ENCODE measurements at regions of chr10 and their contacts with region 1.

Region 1: DNA sequence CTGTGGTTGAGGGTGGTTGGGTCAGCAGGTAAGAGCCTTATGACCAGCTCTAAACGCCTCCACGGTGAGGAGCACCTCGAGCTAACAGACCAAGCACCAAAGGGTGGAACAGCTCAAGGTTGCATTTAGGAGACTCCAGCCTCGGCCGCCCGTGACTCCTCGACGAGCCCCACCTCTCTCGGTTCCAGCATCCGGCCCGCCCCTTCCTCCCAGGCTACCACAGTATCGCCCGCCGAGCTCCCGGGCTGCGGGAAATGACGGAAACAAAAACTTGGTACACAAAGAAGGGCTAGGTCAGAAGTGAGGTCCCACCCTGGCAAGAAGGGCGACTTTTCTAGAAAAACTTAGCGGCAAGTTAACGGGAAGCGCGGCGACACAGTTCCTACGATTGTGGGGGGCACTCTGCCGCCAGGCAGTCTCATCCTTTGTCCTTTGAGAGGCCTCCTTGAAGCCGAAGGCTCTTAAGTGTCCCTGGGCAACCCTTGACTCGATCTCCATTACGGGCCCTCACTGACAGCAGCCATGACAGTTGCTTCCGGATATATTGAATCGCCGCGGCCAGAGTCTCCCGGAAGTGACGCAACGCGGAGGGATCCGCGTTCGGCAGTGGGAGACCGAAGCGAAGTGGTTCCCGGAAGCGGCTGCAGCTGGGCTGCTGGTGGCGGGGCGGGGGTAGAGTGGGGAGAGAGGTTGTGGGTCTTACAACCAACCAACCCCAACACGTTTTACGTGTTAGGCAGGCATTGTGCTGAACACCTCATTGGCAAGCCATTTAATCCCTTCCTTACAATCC is 40.2 kb upstream of the ZNF518A start:
- DNase-seq: peak; percentile 89 to 94 (median 91)
- H3K4me3 ChIP-seq: peak overlapping the region; percentile 71 to 88
- H3K4me3 Mint-ChIP-seq: peak overlapping the region; percentile 91 to 97 (median 96)
- H3K27ac ChIP-seq: peak overlapping the region; percentile 91
- H3K27ac Mint-ChIP-seq: peak overlapping the region; percentile 98 to 100 (median 99)
- H3K4me1 ChIP-seq: peaks cover 12% of the 10 kb centered on the region
- H3K4me1 Mint-ChIP-seq: peaks cover 5 to 11% (median 7%) of the 10 kb centered on the region in 4 donors
- H3K27me3 ChIP-seq: peaks cover 9% of the 10 kb centered on the region
- H3K27me3 Mint-ChIP-seq: peaks cover 23 to 26% of the 10 kb centered on the region in 2 donors

Region 2: GRCh38 chr10:95675403-95676112 is 414.3 kb before region 1 on chr10:
- CTCF ChIA-PET with region 1: no interaction called
- POLR2A ChIA-PET with region 1: no interaction called
- intact Hi-C with region 1: no loop called
- DNase-seq: no peak
- H3K4me3 ChIP-seq: no peak overlapping the region
- H3K4me3 Mint-ChIP-seq: no peak overlapping the region
- H3K27ac ChIP-seq: no peak overlapping the region
- H3K27ac Mint-ChIP-seq: no peak overlapping the region
- H3K4me1 ChIP-seq: no peaks in the 10 kb centered on the region
- H3K4me1 Mint-ChIP-seq: no peaks in the 10 kb centered on the region
- H3K27me3 ChIP-seq: no peaks in the 10 kb centered on the region
- H3K27me3 Mint-ChIP-seq: no peaks in the 10 kb centered on the region

Region 3: DNA sequence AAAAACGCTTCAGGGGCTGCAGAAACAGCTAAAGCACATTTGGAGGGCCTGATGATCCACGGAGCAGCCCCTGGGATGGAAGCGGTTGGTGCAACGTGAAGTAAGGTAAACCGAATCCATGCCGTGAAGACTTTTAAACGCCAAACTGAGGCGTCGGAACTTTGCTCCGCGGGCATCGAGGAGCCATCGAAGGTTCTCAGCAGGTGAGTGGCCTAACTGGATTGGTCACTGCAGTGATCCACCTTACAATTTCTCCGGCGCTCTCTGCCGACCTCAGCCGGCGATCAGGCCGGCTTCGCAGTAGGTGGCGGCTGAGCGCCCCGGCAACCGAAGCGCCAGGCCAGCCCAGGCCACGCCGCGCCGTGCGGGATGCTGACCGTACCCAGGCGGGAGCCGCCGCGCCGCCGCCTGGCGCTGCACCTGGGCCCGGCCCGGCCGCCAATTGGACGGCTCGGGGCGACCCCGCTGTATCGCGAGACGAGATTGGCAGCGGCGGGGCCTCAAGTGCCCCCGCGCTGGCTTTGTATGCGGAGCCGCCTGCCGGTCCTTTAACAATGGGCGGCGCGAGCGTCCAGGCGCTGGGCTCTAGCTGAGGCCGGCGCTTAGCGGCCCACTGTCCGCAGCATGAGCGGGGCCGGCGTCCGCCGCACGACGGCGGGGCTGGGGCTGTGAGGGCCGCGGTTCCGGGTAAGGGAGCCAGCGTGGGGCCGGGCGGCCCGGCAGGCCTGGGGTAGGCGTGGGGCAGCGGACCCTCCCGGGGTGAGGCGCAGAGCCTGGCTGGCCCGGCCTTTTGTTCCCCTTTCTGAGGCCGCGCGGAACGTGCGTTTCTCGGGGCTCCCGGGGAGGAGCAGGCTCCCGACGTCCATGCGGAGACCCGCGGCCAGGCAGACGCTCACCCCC is 46.6 kb before region 1 on chr10 and contains the start of gene CCNJ:
- CTCF ChIA-PET with region 1: interaction called, 3 read pairs
- POLR2A ChIA-PET with region 1: interaction called, 21 read pairs
- intact Hi-C with region 1: loop called (anchors 1 kb)
- DNase-seq: peak; percentile 77 to 87 (median 85)
- H3K4me3 ChIP-seq: peak within 1 kb of the TSS; percentile 60 to 69
- H3K4me3 Mint-ChIP-seq: peak within 1 kb of the TSS; percentile 91 to 96 (median 92)
- H3K27ac ChIP-seq: peak within 1 kb of the TSS; percentile 64
- H3K27ac Mint-ChIP-seq: peak within 1 kb of the TSS; percentile 54 to 95 (median 92)
- H3K4me1 ChIP-seq: peaks cover 19% of the 10 kb centered on the region
- H3K4me1 Mint-ChIP-seq: peaks cover 26 to 48% (median 36%) of the 10 kb centered on the region in 4 donors
- H3K27me3 ChIP-seq: no peaks in the 10 kb centered on the region
- H3K27me3 Mint-ChIP-seq: peaks cover 3 to 6% of the 10 kb centered on the region in 2 donors
- total RNA-seq, gene CCNJ: 7.1 TPM